Naive thymus-derived CD4-positive, alpha-beta T cell (primary cell): ENCODE measurements at regions of chr3 and their contacts with region 1.

Region 1: DNA sequence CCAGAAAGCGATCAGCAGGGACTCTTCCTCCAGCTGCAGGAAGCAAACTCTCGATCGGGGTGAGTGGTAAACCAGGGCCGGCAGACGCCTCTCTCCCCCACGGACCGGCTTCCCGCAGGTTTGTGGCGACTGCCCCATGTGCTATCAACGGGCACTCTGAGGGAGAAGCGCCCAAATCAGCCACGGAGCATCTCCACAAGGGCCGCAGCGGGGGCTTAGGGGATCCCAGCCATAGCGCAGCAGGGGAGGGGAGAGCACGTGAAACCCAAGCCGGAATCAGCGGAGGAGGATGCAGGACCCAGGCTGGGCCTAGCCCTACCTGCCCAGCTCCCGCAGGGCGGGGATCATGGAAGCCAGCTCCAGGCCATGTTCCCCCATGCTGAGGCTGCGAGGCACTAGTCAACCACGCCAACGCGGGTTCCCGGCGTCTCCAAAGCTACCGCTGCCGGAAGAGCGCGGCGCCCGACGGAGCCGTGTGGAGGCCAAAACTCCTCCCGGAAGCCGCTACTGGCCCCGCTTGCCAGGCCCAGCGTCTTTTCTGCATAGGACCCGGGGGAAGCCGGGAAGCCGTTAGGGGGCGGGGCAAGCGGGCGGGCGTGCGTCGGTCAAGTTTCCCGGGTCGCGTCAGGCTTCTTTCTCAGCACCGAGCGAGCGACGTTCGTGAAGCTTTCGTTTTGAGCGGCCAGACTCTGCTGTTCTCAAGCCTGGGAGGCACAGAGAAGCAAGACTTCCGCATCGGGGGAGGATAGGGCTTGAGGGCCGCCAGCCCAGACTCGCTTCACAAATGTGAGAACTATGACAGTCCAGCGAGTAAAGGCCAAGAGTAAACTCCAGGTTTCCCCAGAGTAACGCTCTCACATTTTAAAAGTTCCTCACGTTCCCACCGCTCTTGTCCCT is at the start of gene ATR:
- DNase-seq: peak; percentile 89 to 96 (median 95)
- ATAC-seq: peak; percentile 96
- H3K4me3 ChIP-seq: peak within 1 kb of the TSS; percentile 97
- H3K4me3 Mint-ChIP-seq: peak within 1 kb of the TSS; percentile 93 to 99 (median 97)
- H3K27ac ChIP-seq: peak within 1 kb of the TSS; percentile 94
- H3K27ac Mint-ChIP-seq: peak within 1 kb of the TSS; percentile 96 to 99 (median 98)
- H3K4me1 ChIP-seq: peaks cover 25 to 26% of the 10 kb centered on the region in 2 donors
- H3K4me1 Mint-ChIP-seq: peaks cover 45 to 60% (median 54%) of the 10 kb centered on the region in 7 donors
- H3K27me3 ChIP-seq: no peaks in the 10 kb centered on the region
- H3K27me3 Mint-ChIP-seq: peaks cover 0 to 20% (median 0%) of the 10 kb centered on the region in 5 donors
- total RNA-seq, gene ATR: 31.3 to 48.3 (median 36.2) TPM

Region 2: GRCh38 chr3:141940204-141940776 is 638.3 kb before region 1 on chr3:
- CTCF ChIA-PET with region 1: no interaction called
- POLR2A ChIA-PET with region 1: no interaction called
- intact Hi-C with region 1: no loop called
- DNase-seq: peak in 1 of 9 donors; percentile 51
- ATAC-seq: peak; percentile 16
- H3K4me3 ChIP-seq: no peak overlapping the region
- H3K4me3 Mint-ChIP-seq: no peak overlapping the region
- H3K27ac ChIP-seq: no peak overlapping the region
- H3K27ac Mint-ChIP-seq: no peak overlapping the region
- H3K4me1 ChIP-seq: no peaks in the 10 kb centered on the region
- H3K4me1 Mint-ChIP-seq: peaks cover 0 to 9% (median 5%) of the 10 kb centered on the region in 7 donors
- H3K27me3 ChIP-seq: no peaks in the 10 kb centered on the region
- H3K27me3 Mint-ChIP-seq: no peaks in the 10 kb centered on the region

Region 3: DNA sequence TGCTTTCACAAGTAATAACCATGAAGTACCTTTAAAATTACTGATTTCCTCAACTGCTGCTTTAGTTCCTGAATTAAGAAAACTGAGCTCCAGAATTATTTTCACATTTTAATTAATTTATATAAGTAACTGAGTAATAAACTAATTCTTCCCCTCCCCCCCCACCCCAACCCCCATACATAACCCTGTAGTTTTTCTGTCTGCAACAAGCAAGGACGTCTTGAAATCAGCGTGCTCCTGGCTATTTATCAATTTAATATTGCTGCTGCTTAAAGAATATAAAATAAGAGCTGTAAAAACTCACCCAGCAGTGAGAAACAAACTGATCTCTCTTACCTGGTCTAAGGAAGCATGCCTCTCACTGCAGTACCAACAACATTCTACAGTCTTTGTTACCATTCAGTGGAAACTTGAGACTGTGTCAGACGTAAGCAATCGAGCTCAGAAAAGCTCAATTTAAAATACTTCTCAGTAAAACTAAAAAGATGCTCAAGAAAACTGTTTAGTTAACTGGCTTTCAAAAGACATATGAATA is 550.3 kb before region 1 on chr3:
- CTCF ChIA-PET with region 1: no interaction called
- POLR2A ChIA-PET with region 1: no interaction called
- intact Hi-C with region 1: loop called (anchors 5 to 10 kb)
- DNase-seq: peak in 7 of 9 donors; percentile 45 to 72 (median 63)
- ATAC-seq: peak; percentile 90
- H3K4me3 ChIP-seq: peak overlapping the region; percentile 47
- H3K4me3 Mint-ChIP-seq: peak overlapping the region; percentile 81 to 97 (median 90)
- H3K27ac ChIP-seq: peak overlapping the region; percentile 57
- H3K27ac Mint-ChIP-seq: peak overlapping the region; percentile 49 to 92 (median 82)
- H3K4me1 ChIP-seq: no peaks in the 10 kb centered on the region
- H3K4me1 Mint-ChIP-seq: peaks cover 13 to 50% (median 49%) of the 10 kb centered on the region in 7 donors
- H3K27me3 ChIP-seq: no peaks in the 10 kb centered on the region
- H3K27me3 Mint-ChIP-seq: no peaks in the 10 kb centered on the region

Region 4: GRCh38 chr3:142226484-142226883 is 352.1 kb before region 1 on chr3:
- CTCF ChIA-PET with region 1: no interaction called
- POLR2A ChIA-PET with region 1: no interaction called
- intact Hi-C with region 1: loop called in 1 of 2 experiments (anchors 5 kb)
- DNase-seq: no peak
- ATAC-seq: no peak
- H3K4me3 ChIP-seq: no peak overlapping the region
- H3K4me3 Mint-ChIP-seq: peak overlapping the region; percentile 62 to 94 (median 82)
- H3K27ac ChIP-seq: no peak overlapping the region
- H3K27ac Mint-ChIP-seq: peak overlapping the region in 3 of 9 donors; percentile 18 to 45 (median 33)
- H3K4me1 ChIP-seq: no peaks in the 10 kb centered on the region
- H3K4me1 Mint-ChIP-seq: peaks cover 0 to 21% (median 16%) of the 10 kb centered on the region in 7 donors
- H3K27me3 ChIP-seq: no peaks in the 10 kb centered on the region
- H3K27me3 Mint-ChIP-seq: no peaks in the 10 kb centered on the region

Region 5: DNA sequence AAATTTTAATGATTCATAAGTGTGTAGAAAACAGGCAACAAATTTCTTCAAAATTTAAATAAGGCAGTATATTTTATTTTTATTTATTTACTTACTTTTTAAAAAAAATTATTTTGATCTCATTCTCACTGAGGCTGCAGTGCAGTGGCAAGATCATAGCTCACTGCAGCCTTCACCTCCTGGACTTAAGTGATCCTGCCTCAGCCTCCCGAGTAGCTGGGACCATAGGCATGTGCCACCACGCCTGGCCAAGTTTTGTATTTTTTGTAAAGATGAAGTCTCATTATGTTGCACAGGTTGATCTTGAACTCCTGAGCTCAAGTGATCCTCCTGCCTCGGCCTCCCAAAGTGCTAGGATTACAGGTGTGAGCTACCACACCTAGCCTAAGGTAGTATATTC is 69.5 kb before region 1 on chr3:
- CTCF ChIA-PET with region 1: no interaction called
- POLR2A ChIA-PET with region 1: no interaction called
- intact Hi-C with region 1: loop called (anchors 1 kb)
- DNase-seq: peak in 3 of 9 donors; percentile 3 to 8 (median 5)
- ATAC-seq: peak; percentile 37
- H3K4me3 ChIP-seq: peak overlapping the region; percentile 48
- H3K4me3 Mint-ChIP-seq: peak overlapping the region; percentile 71 to 88 (median 84)
- H3K27ac ChIP-seq: peak overlapping the region; percentile 51
- H3K27ac Mint-ChIP-seq: peak overlapping the region; percentile 74 to 96 (median 89)
- H3K4me1 ChIP-seq: peaks cover 0 to 10% of the 10 kb centered on the region in 2 donors
- H3K4me1 Mint-ChIP-seq: peaks cover 3 to 23% (median 14%) of the 10 kb centered on the region in 7 donors
- H3K27me3 ChIP-seq: no peaks in the 10 kb centered on the region
- H3K27me3 Mint-ChIP-seq: no peaks in the 10 kb centered on the region

Region 6: DNA sequence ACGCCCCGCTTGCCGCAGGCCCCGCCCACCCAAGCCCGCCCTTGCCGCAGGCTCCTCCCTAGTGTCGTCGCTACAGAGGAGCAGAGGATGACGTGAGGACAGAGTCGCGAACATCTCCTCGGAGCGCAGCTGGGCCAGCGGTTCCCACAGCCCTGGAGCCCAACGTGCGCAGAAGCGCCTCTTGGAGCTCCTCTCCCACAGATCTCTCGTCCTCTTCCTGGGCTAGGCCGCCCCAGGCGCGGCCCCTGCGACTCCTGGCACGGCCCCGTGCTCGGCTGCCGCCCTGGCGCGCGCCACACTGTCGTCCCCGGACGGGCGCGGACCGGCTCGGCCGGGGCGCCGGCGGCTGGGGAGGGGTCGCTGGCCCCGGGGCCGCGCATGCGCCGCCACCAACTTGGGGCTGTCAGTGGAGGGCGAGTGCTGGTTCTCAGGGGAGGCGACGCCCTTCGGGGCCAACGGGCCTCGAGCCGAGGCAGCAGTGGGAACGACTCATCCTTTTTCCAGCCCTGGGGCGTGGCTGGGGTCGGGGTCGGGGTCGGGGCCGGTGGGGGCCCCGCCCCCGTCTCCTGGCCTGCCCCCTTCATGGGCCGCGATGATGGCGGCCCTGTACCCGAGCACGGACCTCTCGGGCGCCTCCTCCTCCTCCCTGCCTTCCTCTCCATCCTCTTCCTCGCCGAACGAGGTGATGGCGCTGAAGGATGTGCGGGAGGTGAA is 145.6 kb after region 1 on chr3 and contains the start of gene TRPC1:
- CTCF ChIA-PET with region 1: no interaction called
- POLR2A ChIA-PET with region 1: interaction called, 9 read pairs
- intact Hi-C with region 1: loop called (anchors 1 kb)
- DNase-seq: peak in 8 of 9 donors; percentile 58 to 83 (median 78)
- ATAC-seq: peak; percentile 97
- H3K4me3 ChIP-seq: peak within 1 kb of the TSS; percentile 76
- H3K4me3 Mint-ChIP-seq: peak within 1 kb of the TSS; percentile 80 to 92 (median 88)
- H3K27ac ChIP-seq: peak within 1 kb of the TSS; percentile 76
- H3K27ac Mint-ChIP-seq: peak within 1 kb of the TSS; percentile 31 to 94 (median 88)
- H3K4me1 ChIP-seq: peaks cover 0 to 4% of the 10 kb centered on the region in 2 donors
- H3K4me1 Mint-ChIP-seq: peaks cover 5 to 20% (median 11%) of the 10 kb centered on the region in 7 donors
- H3K27me3 ChIP-seq: peaks cover 0 to 2% of the 10 kb centered on the region in 2 donors
- H3K27me3 Mint-ChIP-seq: peaks cover 20 to 67% (median 22%) of the 10 kb centered on the region in 5 donors
- total RNA-seq, gene TRPC1: 1.5 to 7.6 (median 5.3) TPM

Region 7: GRCh38 chr3:143222505-143222904 is 643.9 kb after region 1 on chr3:
- CTCF ChIA-PET with region 1: no interaction called
- POLR2A ChIA-PET with region 1: no interaction called
- intact Hi-C with region 1: no loop called
- DNase-seq: no peak
- ATAC-seq: no peak
- H3K4me3 ChIP-seq: no peak overlapping the region
- H3K4me3 Mint-ChIP-seq: no peak overlapping the region
- H3K27ac ChIP-seq: no peak overlapping the region
- H3K27ac Mint-ChIP-seq: no peak overlapping the region
- H3K4me1 ChIP-seq: peaks cover 0 to under 1% of the 10 kb centered on the region in 2 donors
- H3K4me1 Mint-ChIP-seq: peaks cover 2 to 25% (median 17%) of the 10 kb centered on the region in 7 donors
- H3K27me3 ChIP-seq: no peaks in the 10 kb centered on the region
- H3K27me3 Mint-ChIP-seq: no peaks in the 10 kb centered on the region

Region 8: DNA sequence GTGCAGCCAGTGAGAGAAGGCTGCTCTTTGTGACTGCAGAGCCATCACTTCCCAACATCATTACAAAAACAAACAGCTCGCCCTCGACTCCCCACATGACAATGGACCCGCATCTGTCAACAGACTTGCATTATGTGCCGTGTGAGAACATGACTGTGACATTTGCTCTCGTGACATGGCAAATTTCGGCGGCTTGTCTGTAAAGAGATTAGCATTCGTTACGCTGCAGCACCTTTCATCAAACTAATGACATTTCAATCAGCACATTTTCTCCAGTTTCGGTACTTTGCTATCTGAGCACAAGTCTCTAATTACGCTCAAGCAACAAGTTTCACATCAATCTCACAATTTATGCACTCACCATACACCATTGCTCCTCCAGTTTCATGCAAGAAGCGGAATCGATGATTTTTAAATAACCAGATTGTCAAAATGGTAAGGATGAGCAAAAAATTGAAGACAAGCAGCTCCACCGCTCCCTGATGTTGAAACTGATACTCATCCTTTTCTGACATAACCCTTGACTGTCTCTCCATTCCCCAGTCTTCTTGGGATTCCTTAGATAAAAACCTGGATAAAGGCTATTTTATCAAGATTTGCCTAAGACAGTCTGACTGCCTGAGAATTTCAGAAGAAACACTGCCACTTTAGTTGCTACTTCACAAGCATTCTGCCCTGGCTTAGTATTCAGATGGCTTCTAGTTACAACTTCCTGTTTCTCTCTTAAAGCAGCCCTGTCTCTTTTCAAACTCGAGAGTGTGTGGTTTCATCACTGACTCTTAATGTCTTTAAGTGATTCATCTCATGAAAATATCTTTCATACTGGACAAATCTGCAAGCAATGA is 1269.4 kb after region 1 on chr3 and contains the start of gene SLC9A9:
- CTCF ChIA-PET with region 1: no interaction called
- POLR2A ChIA-PET with region 1: no interaction called
- intact Hi-C with region 1: loop called in 1 of 2 experiments (anchors 5 kb)
- DNase-seq: peak in 8 of 9 donors; percentile 11 to 50 (median 40)
- ATAC-seq: peak; percentile 93
- H3K4me3 ChIP-seq: peak within 1 kb of the TSS; percentile 71
- H3K4me3 Mint-ChIP-seq: peak within 1 kb of the TSS; percentile 88 to 98 (median 96)
- H3K27ac ChIP-seq: peak within 1 kb of the TSS; percentile 72
- H3K27ac Mint-ChIP-seq: peak within 1 kb of the TSS; percentile 80 to 96 (median 90)
- H3K4me1 ChIP-seq: peaks cover 17 to 21% of the 10 kb centered on the region in 2 donors
- H3K4me1 Mint-ChIP-seq: peaks cover 31 to 62% (median 55%) of the 10 kb centered on the region in 7 donors
- H3K27me3 ChIP-seq: no peaks in the 10 kb centered on the region
- H3K27me3 Mint-ChIP-seq: peaks cover 0 to 4% (median 0%) of the 10 kb centered on the region in 5 donors
- total RNA-seq, gene SLC9A9: 9.3 to 21.9 (median 16.6) TPM